Esophagus squamous epithelium (tissue), 5 donors: ENCODE measurements at regions of chr17 and their contacts with region 1.

Region 1: DNA sequence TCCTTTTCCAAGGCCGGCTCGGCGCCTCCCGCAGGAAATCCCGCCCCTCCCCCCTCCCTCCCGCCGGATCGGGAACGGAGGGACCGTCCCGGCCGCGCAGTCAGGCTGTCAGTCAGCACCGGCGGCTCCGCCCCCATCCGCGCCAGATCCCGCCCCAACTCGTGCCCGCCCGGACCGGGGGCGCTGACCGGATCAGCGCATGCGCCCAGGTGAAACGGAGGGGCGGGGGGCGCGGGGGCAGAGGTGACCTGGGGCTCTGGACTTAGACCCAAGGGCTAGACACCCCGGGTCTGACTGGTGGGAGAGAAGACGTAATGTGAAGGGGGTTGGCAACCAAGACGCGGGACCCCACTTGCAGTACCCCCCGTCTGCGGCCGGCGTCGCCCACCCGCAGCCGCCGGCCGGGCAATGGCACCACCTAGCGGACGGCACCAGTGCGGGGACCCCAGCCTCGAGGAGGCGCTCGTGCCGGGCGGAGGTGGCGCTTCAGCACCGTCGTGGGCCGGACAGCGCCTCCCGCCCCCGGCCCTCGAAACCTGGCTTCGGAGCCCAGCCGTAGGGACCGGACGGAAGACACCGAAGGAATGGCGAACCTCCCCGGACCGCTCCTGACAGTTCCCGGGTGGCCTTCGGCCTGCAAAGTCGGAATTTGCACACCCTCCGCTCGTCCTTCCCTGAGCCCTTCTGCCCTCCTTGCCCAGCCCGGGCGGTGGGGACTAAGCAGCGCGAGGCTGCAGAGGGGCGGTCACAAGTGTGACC is at the start of gene CASKIN2:
- DNase-seq: peak; percentile 33
- H3K4me3 ChIP-seq: peak within 1 kb of the TSS; percentile 73 to 98 (median 92)
- H3K27ac ChIP-seq: peak within 1 kb of the TSS; percentile 90 to 95 (median 92)
- H3K4me1 ChIP-seq: peaks cover 39 to 80% (median 47%) of the 10 kb centered on the region in 3 donors
- H3K27me3 ChIP-seq: no peaks in the 10 kb centered on the region
- CTCF ChIP-seq: peak; percentile 94 to 99 (median 98)
- POLR2A ChIP-seq: no peak
- total RNA-seq, gene CASKIN2: 9.5 to 12.2 (median 10.4) TPM

Region 2: DNA sequence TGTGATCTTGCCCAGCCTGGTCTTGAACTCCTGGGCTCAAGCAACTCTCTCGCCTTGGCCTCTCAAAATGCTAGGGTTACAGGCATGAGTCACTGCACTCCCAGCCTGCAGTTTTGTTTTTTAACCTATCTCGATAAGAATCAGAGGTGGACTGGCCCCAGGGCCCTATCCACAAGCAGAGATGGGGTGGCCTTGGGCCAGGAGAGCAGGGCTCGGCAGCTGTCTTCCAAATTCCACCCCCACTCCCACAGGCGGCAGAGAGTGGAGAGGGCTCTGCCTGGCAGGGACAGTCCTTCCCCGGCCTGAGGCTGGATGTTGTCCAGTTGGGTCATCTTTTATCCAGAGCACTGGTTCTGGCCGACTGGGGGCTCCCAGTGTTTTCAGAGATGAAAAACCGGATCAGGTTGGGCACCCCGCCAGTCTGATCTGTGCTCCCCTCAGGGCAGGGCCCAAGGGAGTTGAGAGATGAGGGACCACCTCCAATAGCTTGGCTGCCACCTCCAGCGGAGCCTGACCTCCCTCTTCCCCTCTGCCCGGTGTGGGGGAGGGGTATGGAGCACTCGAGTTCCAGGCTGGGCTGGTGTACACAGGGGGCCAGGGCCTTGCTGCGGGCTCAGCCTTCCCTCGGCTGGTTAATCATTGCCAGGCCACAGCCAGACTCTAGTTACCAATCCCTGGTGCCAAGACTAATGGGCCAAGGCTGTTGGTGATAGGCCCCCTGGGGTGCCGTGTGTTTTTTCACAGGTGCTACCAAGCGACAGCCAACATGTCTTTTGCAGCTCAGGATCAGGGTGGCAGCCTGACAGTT is 41.6 kb after region 1 on chr17:
- intact Hi-C with region 1: no loop called
- DNase-seq: no peak
- H3K4me3 ChIP-seq: no peak overlapping the region
- H3K27ac ChIP-seq: peak overlapping the region in 1 of 4 donors; percentile 10
- H3K4me1 ChIP-seq: peaks cover 0 to 10% (median 0%) of the 10 kb centered on the region in 3 donors
- H3K27me3 ChIP-seq: no peaks in the 10 kb centered on the region
- CTCF ChIP-seq: no peak
- POLR2A ChIP-seq: no peak

Region 3: DNA sequence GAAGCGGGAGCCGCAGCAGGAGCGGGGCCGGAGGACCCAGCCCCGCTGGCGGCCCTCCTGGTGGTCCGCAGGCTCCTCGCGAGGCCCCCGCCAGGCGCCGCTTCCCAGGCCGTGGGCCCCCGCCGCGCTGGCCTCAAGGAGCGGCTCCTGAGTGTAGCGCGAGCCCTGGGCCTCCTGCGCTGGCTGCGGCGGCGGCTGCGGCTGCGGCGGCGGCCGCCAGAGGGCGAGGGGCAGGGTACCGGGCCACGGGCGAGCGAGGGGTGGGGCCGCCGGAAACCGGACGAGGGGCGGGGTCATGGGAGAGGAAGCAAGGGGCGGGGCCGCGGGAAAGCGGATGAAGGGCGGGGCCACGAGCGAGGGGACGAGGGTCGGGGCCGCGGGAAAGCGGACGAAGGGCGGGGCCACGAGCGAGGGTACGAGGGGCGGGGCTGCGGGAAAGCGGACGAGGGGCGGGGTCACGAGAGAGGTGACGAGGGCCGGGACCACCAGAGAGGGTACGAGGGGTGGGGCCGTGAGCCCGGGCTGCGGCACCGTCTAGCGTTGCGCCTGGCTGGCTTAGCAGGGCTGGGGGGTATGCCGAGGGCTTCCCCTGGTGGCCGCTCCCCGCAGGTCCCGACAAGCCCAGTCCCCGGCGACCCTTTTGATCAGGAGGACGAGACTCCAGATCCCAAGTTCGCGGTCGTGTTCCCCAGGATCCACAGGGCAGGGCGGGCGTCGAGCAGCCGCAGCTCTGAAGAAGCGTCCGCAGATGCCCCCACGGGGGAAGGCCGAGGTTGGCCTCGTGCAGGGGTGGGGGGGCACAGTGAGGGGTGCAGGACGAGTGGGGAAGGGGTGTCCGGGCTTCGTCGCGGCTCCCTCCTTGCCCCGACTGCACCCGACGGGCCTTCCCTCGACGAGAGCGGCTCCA is 73.6 kb after region 1 on chr17:
- intact Hi-C with region 1: loop called (anchors 5 kb)
- DNase-seq: peak; percentile 69
- H3K4me3 ChIP-seq: peak overlapping the region; percentile 34 to 82 (median 65)
- H3K27ac ChIP-seq: peak overlapping the region; percentile 78 to 97 (median 93)
- H3K4me1 ChIP-seq: peaks cover 14 to 40% (median 16%) of the 10 kb centered on the region in 3 donors
- H3K27me3 ChIP-seq: peaks cover 0 to 15% (median 0%) of the 10 kb centered on the region in 4 donors
- CTCF ChIP-seq: peak; percentile 58 to 95 (median 88)
- POLR2A ChIP-seq: peak in 2 of 4 donors; percentile 66 to 79